Dendritic cell treated with granulocyte-macrophage colony-stimulating factor and Interleukin-4, amounts not matched to agents 40 ng/mL and 50 ng/mL, for 4 days (primary cell): ENCODE measurements at regions of chr5 and their contacts with region 1.

Region 1: GRCh38 chr5:56190497-56190896 is 42.6 kb downstream of the ANKRD55 start:
- H3K4me3 Mint-ChIP-seq: no peak overlapping the region
- H3K27ac Mint-ChIP-seq: peak overlapping the region; percentile 83
- H3K4me1 Mint-ChIP-seq: peaks cover 63% of the 10 kb centered on the region
- H3K27me3 Mint-ChIP-seq: no peaks in the 10 kb centered on the region

Region 2: GRCh38 chr5:56155992-56156584 is 34.4 kb before region 1 on chr5:
- intact Hi-C with region 1: loop called (anchors 5 kb)
- H3K4me3 Mint-ChIP-seq: peak overlapping the region; percentile 30
- H3K27ac Mint-ChIP-seq: peak overlapping the region; percentile 91
- H3K4me1 Mint-ChIP-seq: peaks cover 84% of the 10 kb centered on the region
- H3K27me3 Mint-ChIP-seq: no peaks in the 10 kb centered on the region